ENCODE measurements at regions of chr10 and their contacts with region 1.

Region 1: DNA sequence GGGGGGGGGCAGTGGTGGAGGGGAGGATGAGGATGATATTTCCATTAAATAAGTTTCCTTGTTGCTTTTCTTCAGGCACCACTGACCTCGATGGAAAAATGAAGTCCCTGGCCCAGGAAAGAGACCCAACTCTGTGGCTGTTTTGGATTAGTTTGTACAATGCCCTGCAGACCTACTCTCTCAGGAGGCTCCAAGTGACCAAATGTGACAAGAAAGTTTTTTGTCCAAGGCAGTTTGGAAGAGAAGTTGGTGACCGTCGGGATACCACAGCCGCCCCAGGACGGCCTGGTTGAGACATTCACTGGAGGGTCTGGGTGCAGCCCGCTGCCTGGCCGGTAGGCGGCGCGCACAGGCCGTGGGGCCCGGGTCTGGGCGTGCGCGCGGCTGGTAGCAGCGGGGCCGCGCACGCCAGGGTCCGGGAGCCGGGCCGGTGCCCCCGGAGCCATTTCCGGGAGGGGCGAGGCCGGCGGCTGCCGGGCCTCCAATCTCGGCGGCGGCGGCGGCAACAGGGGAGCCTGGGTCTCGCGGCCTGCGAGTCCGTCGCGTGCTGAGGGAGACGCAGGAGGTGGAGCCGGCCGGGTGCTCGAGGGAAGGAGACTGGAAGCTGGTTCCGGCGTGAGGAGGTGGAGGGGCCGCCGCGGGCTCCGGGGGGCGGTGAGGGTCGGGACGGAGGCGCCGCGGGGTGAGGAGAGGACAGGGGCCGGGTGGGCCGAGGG is at the start of gene SGPL1:
- DNase-seq: peak; percentile 65 to 93 (median 84)
- ATAC-seq: peak; percentile 99
- H3K4me3 ChIP-seq: peak within 1 kb of the TSS; percentile 67
- H3K4me3 Mint-ChIP-seq: peak within 1 kb of the TSS; percentile 83 to 95 (median 91)
- H3K27ac ChIP-seq: peak within 1 kb of the TSS; percentile 73
- H3K27ac Mint-ChIP-seq: peak within 1 kb of the TSS; percentile 72 to 93 (median 88)
- H3K4me1 ChIP-seq: peaks cover 4 to 20% of the 10 kb centered on the region in 2 donors
- H3K4me1 Mint-ChIP-seq: peaks cover 17 to 52% (median 43%) of the 10 kb centered on the region in 7 donors
- H3K27me3 ChIP-seq: no peaks in the 10 kb centered on the region
- H3K27me3 Mint-ChIP-seq: peaks cover 0 to 6% (median 0%) of the 10 kb centered on the region in 5 donors
- total RNA-seq, gene SGPL1: 20.9 to 35.5 (median 30.6) TPM

Region 2: DNA sequence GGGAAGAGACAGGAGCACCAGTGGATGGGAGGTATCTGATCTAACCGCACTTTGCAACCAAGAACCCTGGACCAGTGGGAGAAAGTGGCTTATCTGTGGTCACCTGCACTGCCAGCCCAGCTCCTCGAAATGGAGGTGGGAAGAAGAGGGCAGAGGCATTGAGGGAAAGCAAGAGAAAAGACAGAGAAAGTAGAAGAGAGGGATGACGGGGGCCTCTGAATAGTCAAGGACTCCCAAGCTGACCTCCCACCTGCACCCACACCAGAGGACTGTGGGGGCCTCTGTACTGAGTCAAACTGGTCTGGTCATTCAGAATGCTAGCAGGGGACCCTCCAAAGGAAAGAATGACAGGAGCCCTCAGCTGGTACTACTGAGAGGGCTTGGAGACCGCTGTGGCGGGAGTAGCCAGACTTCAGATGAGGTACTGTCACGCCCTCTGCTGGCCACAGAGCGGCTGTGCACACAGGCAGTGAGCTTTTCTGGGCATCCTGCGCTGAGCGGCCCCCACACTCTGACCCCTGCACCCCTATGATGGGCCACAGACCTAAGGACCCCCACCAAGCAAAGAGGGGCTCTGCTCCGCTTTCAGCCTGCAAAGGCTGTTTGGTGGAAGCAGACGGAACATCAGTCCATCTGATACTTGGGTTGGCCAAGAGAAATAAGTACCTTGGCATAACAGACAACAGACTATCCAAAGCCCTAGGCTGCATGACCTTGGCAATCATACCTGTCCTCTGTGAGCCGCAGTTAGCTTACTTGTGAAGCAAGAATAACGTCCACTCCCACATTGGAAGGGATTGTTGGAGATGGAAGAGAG is 901.1 kb before region 1 on chr10:
- CTCF ChIA-PET with region 1: no interaction called
- POLR2A ChIA-PET with region 1: no interaction called
- intact Hi-C with region 1: no loop called
- DNase-seq: peak in 8 of 9 donors; percentile 22 to 39 (median 27)
- ATAC-seq: peak; percentile 73
- H3K4me3 ChIP-seq: no peak overlapping the region
- H3K4me3 Mint-ChIP-seq: no peak overlapping the region
- H3K27ac ChIP-seq: no peak overlapping the region
- H3K27ac Mint-ChIP-seq: no peak overlapping the region
- H3K4me1 ChIP-seq: no peaks in the 10 kb centered on the region
- H3K4me1 Mint-ChIP-seq: peaks cover 0 to 5% (median 0%) of the 10 kb centered on the region in 7 donors
- H3K27me3 ChIP-seq: no peaks in the 10 kb centered on the region
- H3K27me3 Mint-ChIP-seq: peaks cover 0 to 13% (median 7%) of the 10 kb centered on the region in 5 donors

Region 3: DNA sequence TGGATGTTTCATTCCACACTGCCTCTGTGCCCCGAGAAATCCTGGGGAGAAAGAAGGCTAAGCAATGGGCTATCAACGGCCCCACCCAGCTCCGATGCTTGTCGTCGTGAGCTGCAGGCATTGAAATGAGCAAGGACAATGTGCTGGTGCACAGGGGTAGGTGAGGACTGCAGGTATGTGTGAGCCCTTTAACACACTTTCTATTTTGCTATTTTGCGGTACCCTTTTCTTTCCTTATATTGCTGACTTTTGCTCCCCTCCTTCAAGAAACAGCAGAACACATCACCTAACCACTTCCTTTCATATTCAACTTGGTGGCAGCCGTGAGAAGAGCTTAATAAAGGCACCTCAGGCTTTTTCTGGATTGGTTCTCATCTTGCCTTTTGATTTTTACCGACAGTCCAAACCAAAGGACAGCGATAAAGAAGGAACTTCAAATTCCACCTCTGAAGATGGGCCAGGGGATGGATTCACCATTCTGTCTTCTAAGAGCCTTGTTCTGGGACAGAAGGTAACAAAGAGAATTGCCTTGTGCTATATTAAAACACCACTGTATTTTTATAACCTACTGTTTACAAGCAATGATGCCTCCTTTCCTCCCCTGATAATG is 722.2 kb before region 1 on chr10:
- CTCF ChIA-PET with region 1: no interaction called
- POLR2A ChIA-PET with region 1: no interaction called
- intact Hi-C with region 1: loop called in 1 of 2 experiments (anchors 5 kb)
- DNase-seq: peak in 7 of 9 donors; percentile 28 to 52 (median 42)
- ATAC-seq: peak; percentile 75
- H3K4me3 ChIP-seq: peak overlapping the region; percentile 73
- H3K4me3 Mint-ChIP-seq: peak overlapping the region; percentile 70 to 96 (median 89)
- H3K27ac ChIP-seq: peak overlapping the region; percentile 79
- H3K27ac Mint-ChIP-seq: peak overlapping the region; percentile 77 to 99 (median 93)
- H3K4me1 ChIP-seq: peaks cover 17 to 29% of the 10 kb centered on the region in 2 donors
- H3K4me1 Mint-ChIP-seq: peaks cover 18 to 64% (median 57%) of the 10 kb centered on the region in 7 donors
- H3K27me3 ChIP-seq: no peaks in the 10 kb centered on the region
- H3K27me3 Mint-ChIP-seq: no peaks in the 10 kb centered on the region

Region 4: GRCh38 chr10:70381471-70382421 is 433.9 kb before region 1 on chr10:
- CTCF ChIA-PET with region 1: no interaction called
- POLR2A ChIA-PET with region 1: no interaction called
- intact Hi-C with region 1: loop called in 1 of 2 experiments (anchors 5 kb)
- DNase-seq: peak in 6 of 9 donors; percentile 25 to 53 (median 40)
- ATAC-seq: peak; percentile 43
- H3K4me3 ChIP-seq: peak overlapping the region; percentile 94
- H3K4me3 Mint-ChIP-seq: peak overlapping the region; percentile 82 to 92 (median 90)
- H3K27ac ChIP-seq: peak overlapping the region; percentile 32
- H3K27ac Mint-ChIP-seq: peak overlapping the region in 6 of 9 donors; percentile 17 to 86 (median 46)
- H3K4me1 ChIP-seq: peaks cover 4 to 6% of the 10 kb centered on the region in 2 donors
- H3K4me1 Mint-ChIP-seq: peaks cover 2 to 20% (median 10%) of the 10 kb centered on the region in 7 donors
- H3K27me3 ChIP-seq: no peaks in the 10 kb centered on the region
- H3K27me3 Mint-ChIP-seq: no peaks in the 10 kb centered on the region

Region 5: GRCh38 chr10:70461215-70461986 is 354.3 kb before region 1 on chr10:
- CTCF ChIA-PET with region 1: no interaction called
- POLR2A ChIA-PET with region 1: no interaction called
- intact Hi-C with region 1: loop called in 1 of 2 experiments (anchors 5 kb)
- DNase-seq: peak in 6 of 9 donors; percentile 29 to 52 (median 42)
- ATAC-seq: peak; percentile 69
- H3K4me3 ChIP-seq: no peak overlapping the region
- H3K4me3 Mint-ChIP-seq: peak overlapping the region in 1 of 10 donors; percentile 12
- H3K27ac ChIP-seq: no peak overlapping the region
- H3K27ac Mint-ChIP-seq: peak overlapping the region in 2 of 9 donors; percentile 10 to 66
- H3K4me1 ChIP-seq: no peaks in the 10 kb centered on the region
- H3K4me1 Mint-ChIP-seq: peaks cover 0 to 8% (median 3%) of the 10 kb centered on the region in 7 donors
- H3K27me3 ChIP-seq: peaks cover 0 to 4% of the 10 kb centered on the region in 2 donors
- H3K27me3 Mint-ChIP-seq: peaks cover 23 to 46% (median 38%) of the 10 kb centered on the region in 5 donors

Region 6: GRCh38 chr10:70478191-70479164 is 337.2 kb before region 1 on chr10 and contains the start of gene PALD1:
- CTCF ChIA-PET with region 1: no interaction called
- POLR2A ChIA-PET with region 1: no interaction called
- intact Hi-C with region 1: loop called (anchors 2 to 5 kb)
- DNase-seq: peak in 5 of 9 donors; percentile 13 to 71 (median 24)
- ATAC-seq: no peak
- H3K4me3 ChIP-seq: peak within 1 kb of the TSS; percentile 56
- H3K4me3 Mint-ChIP-seq: peak within 1 kb of the TSS; percentile 78 to 90 (median 84)
- H3K27ac ChIP-seq: peak within 1 kb of the TSS; percentile 33
- H3K27ac Mint-ChIP-seq: peak within 1 kb of the TSS; percentile 56 to 93 (median 75)
- H3K4me1 ChIP-seq: peaks cover 29 to 51% of the 10 kb centered on the region in 2 donors
- H3K4me1 Mint-ChIP-seq: peaks cover 28 to 65% (median 56%) of the 10 kb centered on the region in 7 donors
- H3K27me3 ChIP-seq: peaks cover 0 to 4% of the 10 kb centered on the region in 2 donors
- H3K27me3 Mint-ChIP-seq: peaks cover 0 to 74% (median 0%) of the 10 kb centered on the region in 5 donors
- total RNA-seq, gene PALD1: 0.08 to 0.39 (median 0.19) TPM

Region 7: DNA sequence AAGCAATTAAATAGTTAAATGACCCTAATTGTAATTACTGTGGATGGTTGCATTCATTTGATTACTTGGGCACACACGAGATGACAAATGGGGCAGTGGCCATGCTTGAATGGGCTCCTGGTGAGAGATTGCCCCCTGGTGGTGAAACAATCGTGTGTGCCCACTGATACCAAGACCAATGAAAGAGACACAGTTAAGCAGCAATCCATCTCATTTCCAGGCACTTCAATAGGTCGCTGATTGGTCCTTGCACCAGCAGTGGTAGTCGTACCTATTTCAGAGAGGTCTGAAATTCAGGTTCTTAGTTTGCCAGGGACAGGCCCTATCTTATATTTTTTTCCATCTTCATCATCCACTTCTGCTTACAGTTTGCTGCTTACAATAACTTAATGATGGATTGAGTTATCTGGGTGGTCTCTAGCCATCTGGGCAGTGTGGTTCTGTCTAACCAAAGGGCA is 64.4 kb after region 1 on chr10:
- CTCF ChIA-PET with region 1: interaction called, 4 read pairs
- POLR2A ChIA-PET with region 1: interaction called, 3 read pairs
- intact Hi-C with region 1: loop called (anchors 1 kb)
- DNase-seq: peak; percentile 39 to 79 (median 65)
- ATAC-seq: peak; percentile 90
- H3K4me3 ChIP-seq: no peak overlapping the region
- H3K4me3 Mint-ChIP-seq: no peak overlapping the region
- H3K27ac ChIP-seq: no peak overlapping the region
- H3K27ac Mint-ChIP-seq: no peak overlapping the region
- H3K4me1 ChIP-seq: no peaks in the 10 kb centered on the region
- H3K4me1 Mint-ChIP-seq: peaks cover 0 to 8% (median 3%) of the 10 kb centered on the region in 7 donors
- H3K27me3 ChIP-seq: no peaks in the 10 kb centered on the region
- H3K27me3 Mint-ChIP-seq: no peaks in the 10 kb centered on the region

Region 8: DNA sequence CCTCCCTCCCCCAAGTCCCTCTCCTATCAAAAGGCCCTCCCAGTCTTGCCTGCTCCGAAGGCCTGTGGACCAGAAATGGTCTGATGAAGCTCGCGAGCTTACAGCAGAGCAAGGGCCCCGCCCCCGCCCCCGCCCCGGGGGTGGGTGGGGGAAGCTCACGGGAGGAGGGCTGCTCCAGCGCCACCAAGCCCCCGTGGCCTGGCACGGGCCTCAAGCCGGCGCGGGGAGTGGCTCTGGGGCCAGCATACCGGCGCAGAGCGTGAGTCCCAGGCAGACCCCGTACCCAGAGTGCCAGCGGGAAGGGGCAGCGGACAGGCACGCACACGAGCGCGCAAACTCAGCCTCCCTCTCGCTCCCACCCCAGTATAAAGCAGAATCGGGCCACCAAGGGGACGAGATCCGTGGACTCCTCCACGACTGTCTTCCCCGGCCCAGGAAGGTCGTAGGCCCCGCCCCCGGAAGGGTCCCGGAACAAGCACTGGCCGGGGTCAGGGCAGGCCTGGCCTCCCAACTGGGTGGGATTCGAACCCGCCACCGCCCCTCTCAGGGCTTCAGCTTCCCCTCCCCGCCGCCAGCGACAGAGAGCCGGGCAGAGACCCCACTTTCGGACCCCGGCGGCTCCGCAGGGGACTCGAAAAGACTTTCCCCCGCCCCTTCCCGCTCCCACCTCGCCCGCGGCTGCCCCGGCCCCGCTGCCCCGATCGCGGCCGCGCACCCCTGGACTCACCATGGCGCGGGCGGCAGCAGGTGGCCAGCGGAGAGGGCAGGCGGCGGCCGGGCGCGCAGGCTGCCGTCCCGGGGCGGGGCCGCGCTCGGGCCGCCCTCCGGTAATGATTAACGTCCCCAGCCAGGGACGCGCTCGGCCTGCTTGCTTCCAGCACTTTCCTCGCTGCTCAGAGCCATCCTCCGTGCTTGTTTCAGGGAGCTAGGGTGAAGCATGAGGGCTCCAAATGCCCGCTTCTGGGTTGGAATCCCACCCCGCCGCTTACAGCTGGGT is 72.4 kb after region 1 on chr10 and contains the start of gene PCBD1:
- CTCF ChIA-PET with region 1: no interaction called
- POLR2A ChIA-PET with region 1: no interaction called
- intact Hi-C with region 1: loop called in 1 of 2 experiments (anchors 2 kb)
- DNase-seq: peak; percentile 36 to 78 (median 63)
- ATAC-seq: peak; percentile 93
- H3K4me3 ChIP-seq: peak within 1 kb of the TSS; percentile 73
- H3K4me3 Mint-ChIP-seq: peak within 1 kb of the TSS; percentile 84 to 89 (median 88)
- H3K27ac ChIP-seq: peak within 1 kb of the TSS; percentile 74
- H3K27ac Mint-ChIP-seq: peak within 1 kb of the TSS; percentile 53 to 91 (median 78)
- H3K4me1 ChIP-seq: peaks cover 4 to 10% of the 10 kb centered on the region in 2 donors
- H3K4me1 Mint-ChIP-seq: peaks cover 0 to 25% (median 8%) of the 10 kb centered on the region in 7 donors
- H3K27me3 ChIP-seq: no peaks in the 10 kb centered on the region
- H3K27me3 Mint-ChIP-seq: no peaks in the 10 kb centered on the region
- total RNA-seq, gene PCBD1: 4.5 to 29.8 (median 8.3) TPM

Measured in naive thymus-derived CD4-positive, alpha-beta T cell (primary cell).